IMR-90 (cell line): ENCODE measurements at regions of chr9 and their contacts with region 1.

Region 1: DNA sequence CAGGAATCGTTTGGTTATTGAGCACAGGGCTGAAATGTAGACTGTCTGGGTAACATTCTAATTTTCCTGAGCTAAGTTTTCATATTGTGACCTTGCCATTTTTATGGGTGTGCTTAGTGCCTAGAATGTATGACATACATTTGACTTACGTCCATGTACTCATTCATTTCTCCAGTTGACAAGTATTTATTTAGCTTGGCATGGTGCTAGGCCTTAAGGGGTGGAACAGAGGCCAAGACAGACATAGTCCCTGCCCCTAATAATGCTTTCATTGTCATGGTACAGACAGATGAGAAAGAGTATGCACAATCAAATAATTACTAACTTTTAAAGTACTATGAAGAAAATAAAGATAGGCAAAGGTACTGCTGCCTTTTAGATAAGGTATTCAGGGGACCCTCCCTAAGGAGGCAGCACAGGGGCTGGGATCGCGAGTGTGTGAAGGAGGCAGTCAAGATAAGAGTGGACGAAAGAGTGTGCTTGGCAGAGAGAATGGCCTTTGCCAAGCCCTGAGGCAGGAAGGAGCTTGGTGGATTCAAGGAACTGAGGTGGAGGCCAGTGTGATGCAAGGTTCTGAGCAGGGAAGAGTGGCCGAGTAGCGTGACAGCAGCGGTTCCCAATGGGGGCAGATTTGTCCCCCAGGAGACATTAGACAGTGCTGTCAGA is 127.9 kb downstream of the PIP5K1B start:
- DNase-seq: no peak
- ATAC-seq: no peak
- H3K4me3 ChIP-seq: no peak overlapping the region
- H3K27ac ChIP-seq: no peak overlapping the region
- H3K4me1 ChIP-seq: no peaks in the 10 kb centered on the region
- H3K27me3 ChIP-seq: no peaks in the 10 kb centered on the region
- CTCF ChIP-seq: no peak
- POLR2A ChIP-seq: no peak
- RAD21 ChIP-seq: no peak

Region 2: GRCh38 chr9:68530618-68531017 is 302.4 kb before region 1 on chr9:
- CTCF ChIA-PET with region 1: no interaction called
- POLR2A ChIA-PET with region 1: no interaction called
- dilution Hi-C with region 1: no loop called
- in situ Hi-C with region 1: no loop called
- intact Hi-C with region 1: no loop called
- DNase-seq: peak; percentile 19
- ATAC-seq: no peak
- H3K4me3 ChIP-seq: no peak overlapping the region
- H3K27ac ChIP-seq: no peak overlapping the region
- H3K4me1 ChIP-seq: no peaks in the 10 kb centered on the region
- H3K27me3 ChIP-seq: no peaks in the 10 kb centered on the region
- CTCF ChIP-seq: 0 out of 2 replicates have a peak, but pooled peaks have one; percentile 11
- POLR2A ChIP-seq: no peak
- RAD21 ChIP-seq: no peak

Region 3: DNA sequence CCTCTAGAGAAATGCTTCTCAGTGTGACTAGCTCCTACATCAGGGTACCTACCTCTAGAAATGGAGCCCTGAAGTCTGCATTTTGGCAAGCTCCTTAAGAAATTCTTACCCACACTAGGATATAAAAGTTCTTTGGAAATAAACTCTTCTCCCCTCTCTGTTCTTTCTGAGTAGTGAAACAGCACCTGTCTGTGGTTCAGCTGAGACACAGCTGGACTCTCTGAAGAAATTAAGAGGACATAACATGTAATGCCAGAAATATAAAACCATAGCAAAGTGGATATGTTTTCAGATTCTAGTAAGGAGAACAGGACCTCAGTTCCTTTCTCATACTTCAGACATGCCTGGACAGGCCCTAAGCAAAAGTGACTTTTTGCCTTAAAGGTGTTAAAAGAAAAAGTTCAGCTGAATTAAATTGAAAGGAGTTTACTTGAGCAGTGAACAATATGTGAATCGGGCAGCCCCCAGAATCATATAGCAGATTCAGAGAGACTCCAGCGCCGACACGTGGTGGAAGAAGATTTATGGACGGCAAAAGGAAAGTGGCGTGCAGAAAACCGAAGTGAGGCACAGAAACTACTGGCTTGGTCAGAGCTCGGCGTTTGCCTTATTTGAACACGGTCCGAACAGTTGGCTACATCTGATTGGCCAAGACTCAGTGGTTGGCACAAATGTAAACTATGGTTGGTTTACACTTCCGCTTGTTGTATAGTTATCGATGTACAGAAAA is 116.5 kb after region 1 on chr9:
- CTCF ChIA-PET with region 1: no interaction called
- POLR2A ChIA-PET with region 1: no interaction called
- dilution Hi-C with region 1: no loop called
- in situ Hi-C with region 1: no loop called
- intact Hi-C with region 1: loop called (anchors 1 kb)
- DNase-seq: no peak
- ATAC-seq: no peak
- H3K4me3 ChIP-seq: no peak overlapping the region
- H3K27ac ChIP-seq: no peak overlapping the region
- H3K4me1 ChIP-seq: no peaks in the 10 kb centered on the region
- H3K27me3 ChIP-seq: no peaks in the 10 kb centered on the region; the same call in 1 of the 2 replicates
- CTCF ChIP-seq: 0 out of 2 replicates have a peak, but pooled peaks have one; percentile 9
- POLR2A ChIP-seq: no peak
- RAD21 ChIP-seq: no peak